K562 (cell line): ENCODE measurements at regions of chr11 and their contacts with region 1.

Region 1: GRCh38 chr11:64204464-64204989 is 2.0 kb upstream of the FERMT3 start:
- DNase-seq: peak; percentile 79 to 96 (median 86)
- ATAC-seq: peak; percentile 63
- H3K4me3 ChIP-seq: no peak overlapping the region
- H3K27ac ChIP-seq: peak overlapping the region; percentile 29; the same call in 2 of the 3 replicates
- H3K4me1 ChIP-seq: peaks cover 36 to 60% of the 10 kb centered on the region in 2 experiments
- H3K27me3 ChIP-seq: no peaks in the 10 kb centered on the region
- CTCF ChIP-seq: peak; percentile 86 to 97 (median 95)
- EP300 ChIP-seq: peak; percentile 50; the same call in 1 of the 2 replicates
- POLR2A ChIP-seq: peak; percentile 56; the same call in 1 of the 2 replicates
- RAD21 ChIP-seq: peak; percentile 87 to 90

Region 2: GRCh38 chr11:64131683-64132190 is 72.8 kb before region 1 on chr11:
- CTCF ChIA-PET with region 1: no interaction called
- POLR2A ChIA-PET with region 1: no interaction called
- in situ Hi-C with region 1: no loop called
- intact Hi-C with region 1: no loop called
- DNase-seq: no peak
- ATAC-seq: no peak
- H3K4me3 ChIP-seq: no peak overlapping the region
- H3K27ac ChIP-seq: no peak overlapping the region
- H3K4me1 ChIP-seq: peaks cover 0 to 34% of the 10 kb centered on the region in 2 experiments; a peak in 2 of 5 replicates
- H3K27me3 ChIP-seq: no peaks in the 10 kb centered on the region
- CTCF ChIP-seq: no peak
- EP300 ChIP-seq: no peak
- POLR2A ChIP-seq: no peak
- RAD21 ChIP-seq: no peak

Region 3: DNA sequence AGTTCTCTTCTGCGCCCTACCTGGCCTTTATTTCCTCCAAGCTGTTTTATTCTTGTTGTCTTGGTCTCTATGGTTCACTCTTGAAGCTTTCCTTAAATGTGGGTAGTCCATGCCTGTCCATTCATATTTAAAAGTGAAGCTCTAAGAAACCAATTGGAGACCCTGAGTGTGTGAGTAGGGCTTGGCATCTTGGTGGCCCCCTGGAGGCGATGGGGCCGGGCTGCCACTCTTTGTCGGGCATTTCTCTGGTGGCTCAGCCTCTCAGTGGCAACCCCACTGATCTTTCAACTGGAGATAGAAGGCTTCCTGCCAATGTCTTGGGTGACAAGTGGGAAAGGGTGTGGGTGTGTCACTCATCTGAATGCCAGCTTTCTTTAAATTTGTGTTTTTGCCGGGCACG is 12.4 kb after region 1 on chr11:
- CTCF ChIA-PET with region 1: no interaction called
- POLR2A ChIA-PET with region 1: interaction called, 77 read pairs
- in situ Hi-C with region 1: no loop called
- intact Hi-C with region 1: no loop called
- DNase-seq: no peak
- ATAC-seq: no peak
- H3K4me3 ChIP-seq: no peak overlapping the region
- H3K27ac ChIP-seq: no peak overlapping the region
- H3K4me1 ChIP-seq: peaks cover 0 to 15% of the 10 kb centered on the region in 2 experiments; a peak in 2 of 5 replicates
- H3K27me3 ChIP-seq: no peaks in the 10 kb centered on the region
- CTCF ChIP-seq: no peak
- EP300 ChIP-seq: no peak
- POLR2A ChIP-seq: no peak
- RAD21 ChIP-seq: no peak

Region 4: DNA sequence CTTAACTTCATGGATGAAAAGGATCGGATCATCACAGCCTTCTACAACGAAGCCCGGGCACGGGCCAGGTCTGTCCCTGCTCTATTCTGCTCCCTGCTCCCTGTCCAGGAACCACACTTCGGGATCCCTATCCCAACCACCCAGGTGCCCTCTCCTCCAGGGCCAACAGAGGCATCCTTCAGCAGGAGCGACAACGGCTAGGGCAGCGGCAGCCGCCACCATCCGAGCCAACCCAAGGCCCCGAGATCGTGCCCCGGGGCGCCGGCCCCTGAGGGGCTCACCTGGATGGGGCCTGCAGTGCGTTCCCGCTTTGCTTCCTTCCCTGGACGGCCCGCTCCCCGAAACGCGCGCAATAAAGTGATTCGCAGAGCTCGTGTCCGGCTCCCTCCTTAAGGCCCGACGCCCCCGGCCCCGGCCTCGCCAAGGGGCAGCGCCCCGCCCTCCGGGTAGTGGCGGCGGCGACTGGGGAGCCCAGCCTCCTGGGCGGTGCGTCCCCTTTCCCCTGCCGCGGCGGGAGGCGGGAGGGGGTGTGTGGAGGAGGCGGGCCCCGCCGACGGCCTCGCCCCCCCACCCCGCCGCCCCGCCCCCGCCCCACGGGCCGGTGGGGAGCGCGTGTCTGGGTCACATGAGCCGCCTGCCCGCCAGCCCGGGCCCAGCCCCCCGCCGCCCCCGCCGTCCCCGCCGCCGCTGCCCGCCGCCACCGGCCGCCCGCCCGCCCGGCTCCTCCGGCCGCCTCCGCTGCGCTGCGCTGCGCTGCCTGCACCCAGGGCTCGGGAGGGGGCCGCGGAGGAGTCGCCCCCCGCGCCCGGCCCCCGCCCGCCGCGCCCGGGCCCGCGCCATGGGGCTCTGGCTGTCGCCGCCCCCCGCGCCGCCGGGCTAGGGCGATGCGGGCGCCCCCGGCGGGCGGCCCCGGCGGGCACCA is 29.6 kb after region 1 on chr11 and contains the start of gene VEGFB:
- CTCF ChIA-PET with region 1: no interaction called
- POLR2A ChIA-PET with region 1: interaction called, 11 read pairs
- in situ Hi-C with region 1: no loop called
- intact Hi-C with region 1: loop called (anchors 2 kb)
- DNase-seq: peak; percentile 84 to 87 (median 86)
- ATAC-seq: peak; percentile 67
- H3K4me3 ChIP-seq: peak within 1 kb of the TSS; percentile 71
- H3K27ac ChIP-seq: peak within 1 kb of the TSS; percentile 62; the same call in 2 of the 3 replicates
- H3K4me1 ChIP-seq: peaks cover 36 to 69% of the 10 kb centered on the region in 2 experiments
- H3K27me3 ChIP-seq: no peaks in the 10 kb centered on the region
- CTCF ChIP-seq: no peak
- EP300 ChIP-seq: no peak
- POLR2A ChIP-seq: peak; percentile 47; the same call in 1 of the 2 replicates
- RAD21 ChIP-seq: no peak
- polyA plus RNA-seq, gene VEGFB: 12.0 to 12.1 TPM

Region 5: GRCh38 chr11:64269380-64270234 is 65.1 kb after region 1 on chr11:
- CTCF ChIA-PET with region 1: interaction called, 11 read pairs
- POLR2A ChIA-PET with region 1: interaction called, 31 read pairs
- in situ Hi-C with region 1: no loop called
- intact Hi-C with region 1: loop called (anchors 1 kb)
- DNase-seq: peak; percentile 75 to 99 (median 83)
- ATAC-seq: peak; percentile 84
- H3K4me3 ChIP-seq: peak overlapping the region; percentile 60
- H3K27ac ChIP-seq: peak overlapping the region; percentile 96
- H3K4me1 ChIP-seq: peaks cover 32 to 54% of the 10 kb centered on the region in 2 experiments
- H3K27me3 ChIP-seq: no peaks in the 10 kb centered on the region
- CTCF ChIP-seq: peak; percentile 16 to 48 (median 37); a peak in 4 of 6 replicates
- EP300 ChIP-seq: peak; percentile 26; the same call in 1 of the 2 replicates
- POLR2A ChIP-seq: peak; percentile 77
- RAD21 ChIP-seq: peak; percentile 19 to 21; a peak in 2 of 4 replicates